Activated CD4-positive, alpha-beta T cell treated with anti-CD3 and anti-CD28 coated beads for 36 hours (primary cell): ENCODE measurements at regions of chr2 and their contacts with region 1.

Region 1: DNA sequence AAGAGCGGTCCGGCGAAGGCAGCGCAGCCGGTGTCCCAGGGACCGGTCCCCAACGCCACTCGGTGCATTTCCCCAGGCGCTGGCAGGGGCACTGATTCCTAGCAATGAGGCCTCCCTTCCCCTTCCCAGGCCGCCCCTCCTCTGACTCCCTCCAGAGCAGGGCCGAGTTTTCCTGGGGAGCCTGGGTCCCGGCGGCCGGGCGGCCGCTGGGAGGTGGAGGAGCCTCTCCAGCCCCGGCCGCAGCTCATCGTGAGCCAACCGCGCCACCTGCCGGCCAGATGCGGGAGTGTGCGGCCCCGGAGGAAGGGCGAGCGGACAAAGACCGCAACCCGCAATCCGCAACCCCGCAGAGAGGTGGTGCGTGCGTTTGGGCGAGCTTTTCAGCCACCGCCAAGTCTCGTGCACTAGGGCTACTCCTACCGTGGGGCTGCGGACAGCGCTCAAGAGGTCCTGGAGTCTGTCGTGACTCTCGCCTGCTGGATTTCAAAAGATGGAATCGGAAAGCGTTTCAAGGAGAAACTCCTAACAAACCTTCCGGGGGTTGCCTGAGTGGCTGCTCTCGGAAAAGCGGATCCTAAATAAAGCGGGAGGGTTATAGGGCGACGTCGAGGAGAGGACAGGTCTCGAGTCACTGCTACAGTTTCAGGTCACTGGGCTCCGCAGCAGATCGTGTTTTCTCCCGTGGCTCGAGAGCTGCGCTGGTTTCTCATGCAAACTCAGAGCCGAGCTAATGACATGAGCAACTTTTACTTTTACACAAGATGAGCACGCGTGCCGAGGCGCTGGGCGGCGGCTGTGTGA is 1.5 kb upstream of the EPHA4 start:
- DNase-seq: peak; percentile 88
- ATAC-seq: peak; percentile 49
- H3K4me3 Mint-ChIP-seq: peak overlapping the region; percentile 79
- H3K27ac Mint-ChIP-seq: peak overlapping the region; percentile 71
- H3K4me1 Mint-ChIP-seq: peaks cover 28% of the 10 kb centered on the region
- H3K27me3 Mint-ChIP-seq: peaks cover 43% of the 10 kb centered on the region

Region 2: DNA sequence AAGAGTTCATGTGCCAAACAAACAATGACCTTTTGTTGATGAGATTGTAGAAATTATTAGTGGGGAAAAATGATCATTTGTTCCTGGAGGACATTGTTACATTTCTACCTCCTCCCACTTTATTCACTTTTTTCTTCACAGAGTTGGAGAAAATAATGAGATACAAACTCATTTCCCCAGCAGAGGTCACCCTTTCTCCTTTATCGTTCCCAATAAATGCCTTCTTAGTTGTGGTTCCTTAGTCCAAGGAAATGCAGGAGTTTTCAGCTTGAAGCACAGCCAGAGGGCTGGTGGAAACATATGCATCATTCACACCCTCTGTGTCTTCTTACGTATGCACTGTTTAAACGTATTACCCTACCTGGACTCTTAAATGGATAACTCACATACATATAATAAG is 1837.4 kb before region 1 on chr2:
- CTCF ChIA-PET with region 1: no interaction called
- POLR2A ChIA-PET with region 1: no interaction called
- intact Hi-C with region 1: loop called (anchors 1 to 2 kb)
- DNase-seq: no peak
- ATAC-seq: no peak
- H3K4me3 Mint-ChIP-seq: no peak overlapping the region
- H3K27ac Mint-ChIP-seq: no peak overlapping the region
- H3K4me1 Mint-ChIP-seq: no peaks in the 10 kb centered on the region
- H3K27me3 Mint-ChIP-seq: peaks cover 12% of the 10 kb centered on the region

Region 3: DNA sequence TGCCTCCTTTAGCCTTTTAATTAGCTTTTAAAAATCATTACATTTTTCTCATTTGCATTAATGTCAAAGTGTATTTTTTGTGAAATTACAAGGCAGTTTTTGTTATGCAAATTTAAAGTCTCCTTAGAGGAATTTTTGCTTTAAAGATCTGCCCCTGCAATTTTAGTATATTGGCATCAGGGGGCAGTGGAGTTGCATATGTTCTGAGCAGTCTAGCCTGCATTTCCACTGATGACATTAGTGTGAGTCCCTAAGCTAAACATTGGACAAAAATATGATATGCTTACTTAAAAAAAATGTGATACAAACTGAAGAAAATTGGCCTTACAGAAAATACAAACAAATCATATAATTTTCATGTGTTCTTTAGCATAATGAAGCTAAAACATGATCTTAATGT is 1519.7 kb before region 1 on chr2:
- CTCF ChIA-PET with region 1: no interaction called
- POLR2A ChIA-PET with region 1: no interaction called
- intact Hi-C with region 1: loop called in 1 of 2 experiments (anchors 2 kb)
- DNase-seq: no peak
- ATAC-seq: no peak
- H3K4me3 Mint-ChIP-seq: no peak overlapping the region
- H3K27ac Mint-ChIP-seq: no peak overlapping the region
- H3K4me1 Mint-ChIP-seq: no peaks in the 10 kb centered on the region
- H3K27me3 Mint-ChIP-seq: peaks cover 4% of the 10 kb centered on the region

Region 4: GRCh38 chr2:220648628-220649027 is 925.0 kb before region 1 on chr2:
- CTCF ChIA-PET with region 1: no interaction called
- POLR2A ChIA-PET with region 1: no interaction called
- intact Hi-C with region 1: no loop called
- DNase-seq: no peak
- ATAC-seq: no peak
- H3K4me3 Mint-ChIP-seq: no peak overlapping the region
- H3K27ac Mint-ChIP-seq: no peak overlapping the region
- H3K4me1 Mint-ChIP-seq: peaks cover 4% of the 10 kb centered on the region
- H3K27me3 Mint-ChIP-seq: peaks cover 8% of the 10 kb centered on the region

Region 5: DNA sequence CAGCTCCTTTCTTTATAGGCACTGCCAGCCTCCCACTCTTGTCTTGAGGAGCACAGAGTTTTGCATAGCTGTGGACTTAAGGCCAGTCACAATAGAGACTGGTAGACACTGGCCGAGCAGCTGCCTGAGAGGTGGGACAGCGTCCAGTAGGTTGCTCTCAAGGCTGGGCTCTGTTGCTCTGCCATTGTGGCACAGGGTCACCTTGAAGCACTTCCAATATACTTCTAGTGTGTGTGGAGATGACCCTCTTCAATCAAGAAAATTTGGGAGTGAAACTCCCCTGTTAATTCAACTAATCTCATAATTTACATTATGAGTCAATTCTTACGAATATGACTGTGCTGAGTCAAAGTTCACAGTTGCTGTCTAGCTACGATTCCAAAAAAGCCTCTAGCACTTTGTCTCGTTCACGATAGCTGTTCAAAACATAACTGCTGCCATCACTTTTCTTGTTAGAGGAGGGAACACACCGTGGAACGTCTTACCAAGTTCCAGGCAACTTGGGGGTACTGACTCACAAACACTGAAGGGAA is 637.8 kb before region 1 on chr2:
- CTCF ChIA-PET with region 1: no interaction called
- POLR2A ChIA-PET with region 1: no interaction called
- intact Hi-C with region 1: loop called (anchors 5 to 10 kb)
- DNase-seq: peak; percentile 43
- ATAC-seq: peak; percentile 93
- H3K4me3 Mint-ChIP-seq: no peak overlapping the region
- H3K27ac Mint-ChIP-seq: peak overlapping the region; percentile 14
- H3K4me1 Mint-ChIP-seq: peaks cover 11% of the 10 kb centered on the region
- H3K27me3 Mint-ChIP-seq: peaks cover 6% of the 10 kb centered on the region

Region 6: DNA sequence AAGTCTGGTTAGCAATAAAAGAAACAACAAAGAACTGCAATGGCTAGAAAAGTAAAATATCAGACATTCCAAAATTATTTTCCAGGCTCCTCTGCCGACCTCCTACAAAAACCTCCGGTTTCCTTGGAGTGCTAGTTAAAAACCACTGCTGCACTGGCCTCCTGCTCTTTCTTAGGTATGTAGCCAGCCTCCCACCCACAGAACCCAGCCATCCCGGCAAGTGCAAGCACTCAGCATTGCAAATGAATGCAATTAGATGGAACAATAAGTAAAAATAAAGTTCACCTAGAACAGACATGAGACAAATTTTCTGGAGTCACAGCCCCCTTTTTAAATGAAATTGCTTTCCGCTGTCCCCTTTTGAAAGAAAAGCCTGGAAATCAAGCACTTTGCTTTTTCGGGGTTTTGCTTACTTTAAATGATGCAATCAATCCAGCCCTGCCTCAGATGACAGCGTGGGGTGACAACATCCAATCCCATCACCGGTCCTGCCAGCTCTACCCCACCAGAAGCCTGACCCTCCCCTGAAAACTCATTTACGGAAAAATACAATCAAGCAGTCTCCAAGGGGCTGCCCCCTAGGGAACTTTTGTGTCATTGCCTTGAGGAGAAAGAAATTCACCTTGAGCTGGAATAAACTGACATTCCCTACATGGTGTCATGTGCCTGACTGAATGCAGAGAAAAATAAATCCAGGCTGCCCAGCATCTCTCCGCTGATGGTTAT is 201.3 kb before region 1 on chr2:
- CTCF ChIA-PET with region 1: no interaction called
- POLR2A ChIA-PET with region 1: no interaction called
- intact Hi-C with region 1: loop called in 1 of 2 experiments (anchors 5 kb)
- DNase-seq: no peak
- ATAC-seq: no peak
- H3K4me3 Mint-ChIP-seq: no peak overlapping the region
- H3K27ac Mint-ChIP-seq: no peak overlapping the region
- H3K4me1 Mint-ChIP-seq: no peaks in the 10 kb centered on the region
- H3K27me3 Mint-ChIP-seq: peaks cover 2% of the 10 kb centered on the region

Region 7: DNA sequence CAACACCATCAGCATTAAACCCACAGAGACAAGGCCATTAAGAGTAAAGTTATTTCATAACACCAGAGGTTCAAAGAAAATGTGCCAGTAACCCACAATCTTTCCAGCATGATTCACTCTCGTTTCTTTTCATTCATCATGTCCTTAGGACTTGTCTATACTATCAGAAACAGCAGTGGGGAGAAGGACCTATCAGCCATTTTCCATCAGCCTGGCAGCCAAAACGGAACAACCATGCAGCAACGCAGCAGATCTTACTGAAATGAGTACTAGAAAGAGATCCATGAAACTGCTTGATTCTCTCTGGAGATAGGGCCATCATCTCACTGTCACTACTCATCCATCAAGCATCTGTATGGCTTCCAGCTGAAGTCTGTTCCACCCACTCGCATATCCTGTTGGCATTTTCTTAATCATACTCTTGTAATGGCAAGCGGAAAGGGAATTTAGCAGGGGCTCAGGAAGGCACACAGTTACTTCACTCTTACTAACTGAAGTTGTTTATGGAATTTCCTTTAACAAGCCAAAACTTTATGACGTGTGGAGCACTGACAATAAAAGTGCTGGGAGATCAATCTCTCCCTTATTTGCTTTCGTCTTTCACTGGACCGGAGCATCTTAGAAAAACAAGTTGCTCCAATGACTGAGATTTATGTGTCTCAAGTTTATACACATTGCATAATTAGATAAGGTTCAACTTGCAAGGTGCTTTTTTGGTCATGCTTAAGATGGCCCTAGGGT is 71.2 kb before region 1 on chr2:
- CTCF ChIA-PET with region 1: no interaction called
- POLR2A ChIA-PET with region 1: no interaction called
- intact Hi-C with region 1: loop called in 1 of 2 experiments (anchors 5 kb)
- DNase-seq: peak; percentile 56
- ATAC-seq: peak; percentile 84
- H3K4me3 Mint-ChIP-seq: no peak overlapping the region
- H3K27ac Mint-ChIP-seq: peak overlapping the region; percentile 66
- H3K4me1 Mint-ChIP-seq: peaks cover 37% of the 10 kb centered on the region
- H3K27me3 Mint-ChIP-seq: no peaks in the 10 kb centered on the region

Region 8: DNA sequence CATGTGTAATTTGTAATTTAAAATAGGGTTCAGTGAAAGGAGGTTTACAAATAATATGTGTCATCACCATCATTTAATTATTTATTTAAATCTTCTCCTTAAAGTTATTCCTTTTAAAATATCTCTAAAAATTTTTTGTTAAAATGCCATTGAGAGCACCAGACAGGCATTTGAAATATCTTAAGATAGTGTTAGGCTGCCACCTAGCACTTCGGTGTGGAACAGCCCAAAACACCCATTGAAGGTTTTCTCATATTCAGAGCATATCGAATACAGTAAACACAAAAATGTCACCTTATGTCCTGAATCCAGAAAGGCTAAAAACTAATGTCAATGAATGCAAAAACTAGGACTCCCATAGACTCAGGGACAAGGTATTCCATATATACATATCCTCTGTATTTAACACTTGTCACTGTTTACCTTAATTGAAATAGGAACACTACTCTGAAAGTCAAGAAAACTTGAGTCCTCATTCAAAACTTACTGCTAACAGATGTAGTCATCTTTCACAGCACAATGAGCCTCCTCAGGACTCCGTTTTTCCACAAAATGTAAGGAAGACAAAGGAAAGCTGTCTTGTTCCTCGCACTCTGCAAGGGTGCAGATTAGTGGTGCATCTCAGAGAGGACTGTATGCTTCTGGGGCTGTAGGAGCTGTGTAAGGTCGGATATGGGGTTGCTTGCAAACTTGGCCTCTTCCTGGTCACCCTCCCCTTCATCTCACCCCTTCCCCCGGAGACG is 395.6 kb after region 1 on chr2:
- CTCF ChIA-PET with region 1: no interaction called
- POLR2A ChIA-PET with region 1: no interaction called
- intact Hi-C with region 1: loop called in 1 of 2 experiments (anchors 2 kb)
- DNase-seq: peak; percentile 11
- ATAC-seq: no peak
- H3K4me3 Mint-ChIP-seq: no peak overlapping the region
- H3K27ac Mint-ChIP-seq: no peak overlapping the region
- H3K4me1 Mint-ChIP-seq: no peaks in the 10 kb centered on the region
- H3K27me3 Mint-ChIP-seq: peaks cover 4% of the 10 kb centered on the region

Region 9: GRCh38 chr2:222180619-222181018 is 607.0 kb after region 1 on chr2:
- CTCF ChIA-PET with region 1: no interaction called
- POLR2A ChIA-PET with region 1: no interaction called
- intact Hi-C with region 1: no loop called
- DNase-seq: no peak
- ATAC-seq: no peak
- H3K4me3 Mint-ChIP-seq: no peak overlapping the region
- H3K27ac Mint-ChIP-seq: no peak overlapping the region
- H3K4me1 Mint-ChIP-seq: no peaks in the 10 kb centered on the region
- H3K27me3 Mint-ChIP-seq: peaks cover 1% of the 10 kb centered on the region